GM18951 (cell line): ENCODE measurements at regions of chr2 and their contacts with region 1.

Region 1: DNA sequence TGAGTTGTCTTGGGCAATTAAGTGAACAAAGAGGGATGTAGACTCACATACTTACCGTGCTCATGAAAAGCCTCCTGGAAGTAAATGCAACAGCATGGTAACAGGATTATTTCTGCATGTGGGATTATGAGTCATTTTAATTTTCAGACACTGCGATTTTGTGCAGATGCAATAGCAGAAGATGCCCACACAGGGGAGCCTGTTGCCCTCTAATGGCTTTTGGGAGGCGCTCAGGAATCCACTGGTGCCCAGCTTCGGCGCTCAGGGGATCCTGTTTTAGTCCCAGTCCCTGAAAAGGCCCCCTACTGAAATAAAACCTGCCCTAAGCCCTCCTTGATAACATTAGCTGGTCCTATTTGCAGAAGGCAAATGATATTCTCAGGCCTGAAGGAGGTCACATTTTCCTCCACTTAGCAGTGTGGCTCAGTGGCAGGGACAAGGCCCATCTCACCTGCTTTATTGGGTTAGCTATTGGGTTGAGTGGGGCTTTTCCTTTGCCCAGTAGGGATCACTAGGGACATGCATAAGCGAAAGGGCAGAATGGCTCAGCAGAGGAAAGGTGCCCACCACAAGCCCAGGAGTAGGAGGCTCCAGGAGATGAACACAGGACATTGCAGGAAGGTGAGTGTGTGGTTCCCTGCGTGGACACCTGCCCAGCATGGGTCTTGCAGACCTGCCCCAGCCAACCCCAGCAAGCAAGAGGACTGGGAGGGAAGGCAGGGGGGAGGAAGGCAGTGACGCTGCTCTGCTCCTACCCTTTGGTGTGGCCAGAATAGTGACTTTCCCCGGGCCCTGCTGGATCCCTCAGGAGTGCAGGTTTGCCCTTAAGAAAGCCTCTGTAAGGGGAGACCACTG is 26.5 kb upstream of the KCNS3 start:
- POLR2A ChIP-seq: no peak

Region 2: GRCh38 chr2:17442334-17442733 is 409.6 kb before region 1 on chr2:
- in situ Hi-C with region 1: no loop called
- POLR2A ChIP-seq: no peak

Region 3: GRCh38 chr2:17495590-17495989 is 356.4 kb before region 1 on chr2:
- in situ Hi-C with region 1: no loop called
- POLR2A ChIP-seq: no peak

Region 4: GRCh38 chr2:17912266-17912691 is 60.3 kb after region 1 on chr2:
- in situ Hi-C with region 1: no loop called
- POLR2A ChIP-seq: no peak

Region 5: GRCh38 chr2:18149645-18150246 is 297.8 kb after region 1 on chr2:
- in situ Hi-C with region 1: loop called (anchors 25 kb)
- POLR2A ChIP-seq: no peak

Region 6: DNA sequence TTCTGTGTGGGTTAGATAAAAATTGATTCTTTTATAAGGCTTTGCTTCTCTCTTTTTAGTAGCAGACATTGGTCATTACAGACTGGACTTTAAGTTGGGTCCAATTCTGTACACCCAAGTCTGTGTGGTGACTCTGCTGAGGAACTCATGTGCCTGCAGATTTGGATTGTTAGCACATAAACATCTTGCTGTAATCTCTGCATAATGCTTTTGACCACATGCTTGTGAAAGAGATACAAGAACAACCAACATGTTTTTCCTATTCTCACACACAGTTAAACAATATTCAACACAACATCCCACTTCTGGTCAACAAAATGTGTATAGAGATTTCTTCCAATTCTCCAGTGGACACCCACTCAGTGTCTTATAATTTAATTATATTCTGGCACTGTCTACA is 438.4 kb after region 1 on chr2:
- in situ Hi-C with region 1: no loop called
- POLR2A ChIP-seq: no peak